IMR-90 (cell line): ENCODE measurements at regions of chr6 and their contacts with region 1.

Region 1: DNA sequence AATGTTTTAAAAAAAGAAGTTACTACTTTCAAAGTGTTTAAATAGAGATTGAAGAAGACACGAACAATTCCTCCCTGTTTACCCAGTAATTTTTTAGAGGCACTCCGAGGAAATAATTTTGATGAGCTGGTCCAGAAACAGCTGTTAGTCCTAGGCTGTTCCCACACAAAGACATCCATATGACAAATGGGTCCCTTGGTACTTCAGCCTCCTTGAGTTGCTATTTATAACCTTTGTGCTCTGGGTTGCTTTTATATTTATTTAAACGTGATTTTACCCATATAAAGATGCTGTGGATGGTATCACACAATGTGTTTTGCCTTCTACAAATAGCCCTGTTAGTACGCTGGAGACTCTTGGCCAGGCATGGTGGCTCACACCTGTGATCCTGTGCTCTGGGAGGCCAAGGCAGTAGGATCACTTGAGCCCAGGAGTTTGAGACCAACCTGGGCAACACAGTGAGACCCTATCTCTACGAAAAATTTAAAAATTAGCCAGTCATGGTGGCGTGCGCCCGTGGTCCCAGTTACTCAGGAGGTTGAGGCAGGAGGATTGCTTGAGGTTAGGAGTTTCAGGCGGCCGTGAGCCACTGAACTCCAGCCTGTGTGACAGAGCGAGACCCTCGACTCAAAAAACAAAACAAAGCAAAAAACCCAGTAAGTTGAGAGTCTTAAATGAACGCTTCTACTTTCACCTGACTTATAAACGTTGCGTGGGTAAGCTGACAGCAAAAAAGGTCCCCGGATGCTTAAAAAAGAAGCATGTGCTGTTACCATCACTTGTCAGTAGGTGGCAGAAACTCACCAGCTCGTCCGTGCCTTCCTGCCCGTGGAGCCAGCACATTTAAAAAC is 56.9 kb upstream of the ARMH2 start:
- DNase-seq: peak; percentile 78
- ATAC-seq: peak; percentile 89
- H3K4me3 ChIP-seq: no peak overlapping the region
- H3K27ac ChIP-seq: no peak overlapping the region
- H3K4me1 ChIP-seq: no peaks in the 10 kb centered on the region; the same call in 1 of the 2 replicates
- H3K27me3 ChIP-seq: no peaks in the 10 kb centered on the region
- CTCF ChIP-seq: peak; percentile 97
- POLR2A ChIP-seq: peak; percentile 45; the same call in 1 of the 2 replicates
- RAD21 ChIP-seq: peak; percentile 98

Region 2: DNA sequence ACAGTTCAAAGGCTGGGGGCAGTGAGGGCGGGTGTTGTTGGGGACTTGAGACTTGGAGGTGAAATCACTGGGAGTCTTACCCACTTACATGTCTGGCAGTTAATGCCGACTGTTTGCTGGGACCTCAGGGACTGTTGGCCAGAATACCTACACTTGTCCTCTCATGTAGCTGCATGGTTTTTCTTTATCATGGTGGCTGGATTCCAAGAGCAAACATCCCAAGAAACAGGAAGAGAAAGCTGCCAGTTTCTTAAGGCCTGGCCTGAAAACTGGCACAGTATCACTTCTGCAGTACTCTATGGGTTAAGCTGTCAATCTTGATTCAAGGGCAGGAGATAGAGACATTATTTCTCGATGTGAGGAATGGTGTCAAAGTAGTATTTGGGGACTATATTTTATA is 116.9 kb before region 1 on chr6:
- CTCF ChIA-PET with region 1: no interaction called
- POLR2A ChIA-PET with region 1: no interaction called
- dilution Hi-C with region 1: no loop called
- in situ Hi-C with region 1: no loop called
- intact Hi-C with region 1: no loop called
- DNase-seq: no peak
- ATAC-seq: no peak
- H3K4me3 ChIP-seq: no peak overlapping the region
- H3K27ac ChIP-seq: no peak overlapping the region
- H3K4me1 ChIP-seq: peaks cover 3% of the 10 kb centered on the region
- H3K27me3 ChIP-seq: no peaks in the 10 kb centered on the region
- CTCF ChIP-seq: no peak
- POLR2A ChIP-seq: no peak
- RAD21 ChIP-seq: no peak

Region 3: DNA sequence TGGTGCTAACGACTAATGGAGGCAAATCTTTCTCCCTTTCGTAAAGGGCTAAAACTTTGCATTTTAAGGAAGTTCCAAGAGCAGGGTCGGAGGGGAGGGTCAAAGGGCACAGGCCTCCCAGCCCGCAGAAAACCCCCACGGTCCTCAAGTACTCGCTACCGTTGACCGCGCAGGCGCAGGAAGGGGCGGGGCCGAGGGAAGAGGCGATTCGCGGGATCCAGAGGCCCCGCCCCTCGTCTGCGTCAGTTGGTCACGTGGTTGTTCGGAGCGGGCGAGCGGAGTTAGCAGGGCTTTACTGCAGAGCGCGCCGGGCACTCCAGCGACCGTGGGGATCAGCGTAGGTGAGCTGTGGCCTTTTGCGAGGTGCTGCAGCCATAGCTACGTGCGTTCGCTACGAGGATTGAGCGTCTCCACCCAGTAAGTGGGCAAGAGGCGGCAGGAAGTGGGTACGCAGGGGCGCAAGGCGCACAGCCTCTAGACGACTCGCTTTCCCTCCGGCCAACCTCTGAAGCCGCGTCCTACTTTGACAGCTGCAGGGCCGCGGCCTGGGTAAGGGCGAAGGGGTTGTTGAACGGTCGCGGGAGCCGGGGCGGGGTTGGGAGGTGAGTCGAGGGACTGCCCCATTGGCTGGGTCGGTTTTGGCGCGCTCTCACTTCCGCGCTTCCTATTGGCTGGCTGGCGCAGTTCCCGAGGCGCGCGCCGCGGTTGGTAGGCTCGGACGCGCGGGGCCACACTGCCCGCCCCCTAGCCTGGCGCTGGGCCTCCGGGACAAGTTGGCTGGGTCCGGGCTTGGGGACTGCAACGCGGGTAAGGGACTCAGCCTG is 80.7 kb before region 1 on chr6 and contains the start of gene GMNN:
- CTCF ChIA-PET with region 1: no interaction called
- POLR2A ChIA-PET with region 1: no interaction called
- dilution Hi-C with region 1: no loop called
- in situ Hi-C with region 1: no loop called
- intact Hi-C with region 1: loop called (anchors 5 kb)
- DNase-seq: peak; percentile 89
- ATAC-seq: peak; percentile 93
- H3K4me3 ChIP-seq: peak within 1 kb of the TSS; percentile 87
- H3K27ac ChIP-seq: peak within 1 kb of the TSS; percentile 83
- H3K4me1 ChIP-seq: peaks cover 8% of the 10 kb centered on the region
- H3K27me3 ChIP-seq: no peaks in the 10 kb centered on the region
- CTCF ChIP-seq: no peak
- POLR2A ChIP-seq: peak; percentile 73; the same call in 1 of the 2 replicates
- RAD21 ChIP-seq: no peak
- total RNA-seq, gene GMNN: 19.7 and 33.1 TPM in 2 replicates

Region 4: GRCh38 chr6:24919004-24919892 is 63.6 kb after region 1 on chr6:
- CTCF ChIA-PET with region 1: no interaction called
- POLR2A ChIA-PET with region 1: no interaction called
- dilution Hi-C with region 1: no loop called
- in situ Hi-C with region 1: no loop called
- intact Hi-C with region 1: no loop called
- DNase-seq: no peak
- ATAC-seq: peak; percentile 74
- H3K4me3 ChIP-seq: no peak overlapping the region
- H3K27ac ChIP-seq: peak overlapping the region; percentile 73; the same call in 1 of the 2 replicates
- H3K4me1 ChIP-seq: peaks cover 16% of the 10 kb centered on the region
- H3K27me3 ChIP-seq: no peaks in the 10 kb centered on the region
- CTCF ChIP-seq: no peak
- POLR2A ChIP-seq: no peak
- RAD21 ChIP-seq: no peak

Region 5: DNA sequence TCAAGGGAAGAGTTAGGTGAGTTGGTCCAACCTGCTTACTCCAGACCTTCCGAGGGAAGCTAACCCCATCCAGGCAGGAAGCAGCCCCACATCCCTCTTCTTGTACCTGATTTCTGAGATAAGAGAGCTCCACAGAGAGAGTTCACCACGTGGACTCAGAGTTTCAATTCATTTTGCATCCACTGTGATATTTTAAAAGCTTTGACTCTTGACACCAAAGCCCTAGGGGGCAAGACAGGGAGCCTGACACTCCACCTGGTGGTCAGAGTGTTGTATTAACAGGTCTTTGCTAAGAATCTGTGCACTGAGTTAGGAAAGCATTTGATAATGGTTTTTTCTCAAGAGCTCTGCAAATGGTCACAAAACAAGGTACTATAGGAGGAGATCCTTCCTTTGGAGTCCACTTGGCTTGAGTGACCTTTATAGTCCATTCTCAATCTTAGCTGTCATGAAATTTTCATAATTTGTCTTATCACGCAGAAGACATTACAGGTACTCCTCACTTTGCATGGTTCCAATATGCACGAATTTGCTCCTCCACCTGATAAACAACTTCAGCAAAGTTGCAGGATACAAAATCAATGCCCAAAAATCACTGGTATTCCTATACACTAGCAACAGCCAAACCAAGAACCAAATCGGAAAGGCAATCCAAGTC is 136.3 kb after region 1 on chr6:
- CTCF ChIA-PET with region 1: interaction called, 24 read pairs
- POLR2A ChIA-PET with region 1: no interaction called
- dilution Hi-C with region 1: no loop called
- in situ Hi-C with region 1: no loop called
- intact Hi-C with region 1: loop called (anchors 1 kb)
- DNase-seq: peak; percentile 48
- ATAC-seq: peak; percentile 74
- H3K4me3 ChIP-seq: no peak overlapping the region
- H3K27ac ChIP-seq: no peak overlapping the region
- H3K4me1 ChIP-seq: peaks cover 3% of the 10 kb centered on the region
- H3K27me3 ChIP-seq: no peaks in the 10 kb centered on the region
- CTCF ChIP-seq: peak; percentile 65
- POLR2A ChIP-seq: no peak
- RAD21 ChIP-seq: peak; percentile 69

Region 6: DNA sequence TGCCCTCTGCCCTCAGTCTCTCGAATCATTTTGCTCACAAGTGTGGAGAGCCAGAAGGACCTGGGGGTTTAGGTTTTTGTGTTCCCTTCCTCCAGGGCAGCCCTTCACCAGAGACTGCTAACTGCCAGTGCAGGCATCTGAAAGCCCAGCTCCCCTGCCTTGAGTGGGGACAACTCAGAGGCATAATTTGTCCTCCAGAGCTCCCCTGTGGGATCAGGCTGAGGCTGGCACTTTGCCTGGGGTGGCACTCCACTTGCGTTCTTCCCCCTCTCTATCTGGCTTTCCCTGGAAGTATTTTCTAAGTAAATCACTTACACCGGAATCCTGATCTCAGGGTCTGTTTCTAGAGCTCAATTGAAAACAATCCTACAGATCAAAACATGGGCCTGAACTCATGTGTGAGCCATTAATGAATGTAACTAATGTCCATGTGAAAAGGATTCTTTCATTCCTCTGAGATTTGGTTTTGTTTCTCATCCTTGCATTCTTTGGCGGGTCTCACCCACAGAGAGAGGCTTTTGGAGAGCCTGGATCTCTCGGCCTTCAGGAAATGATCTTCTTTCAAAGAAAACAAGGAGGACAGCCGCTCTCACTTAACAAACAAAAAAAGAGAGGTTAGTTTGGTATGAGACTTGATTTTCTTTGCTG is 205.8 kb after region 1 on chr6:
- CTCF ChIA-PET with region 1: interaction called, 3 read pairs
- POLR2A ChIA-PET with region 1: no interaction called
- dilution Hi-C with region 1: no loop called
- in situ Hi-C with region 1: loop called (anchors 5 kb)
- intact Hi-C with region 1: no loop called
- DNase-seq: peak; percentile 14
- ATAC-seq: peak; percentile 67
- H3K4me3 ChIP-seq: no peak overlapping the region
- H3K27ac ChIP-seq: peak overlapping the region; percentile 59; the same call in 1 of the 2 replicates
- H3K4me1 ChIP-seq: peaks cover 12% of the 10 kb centered on the region
- H3K27me3 ChIP-seq: no peaks in the 10 kb centered on the region
- CTCF ChIP-seq: no peak
- POLR2A ChIP-seq: no peak
- RAD21 ChIP-seq: no peak

Region 7: DNA sequence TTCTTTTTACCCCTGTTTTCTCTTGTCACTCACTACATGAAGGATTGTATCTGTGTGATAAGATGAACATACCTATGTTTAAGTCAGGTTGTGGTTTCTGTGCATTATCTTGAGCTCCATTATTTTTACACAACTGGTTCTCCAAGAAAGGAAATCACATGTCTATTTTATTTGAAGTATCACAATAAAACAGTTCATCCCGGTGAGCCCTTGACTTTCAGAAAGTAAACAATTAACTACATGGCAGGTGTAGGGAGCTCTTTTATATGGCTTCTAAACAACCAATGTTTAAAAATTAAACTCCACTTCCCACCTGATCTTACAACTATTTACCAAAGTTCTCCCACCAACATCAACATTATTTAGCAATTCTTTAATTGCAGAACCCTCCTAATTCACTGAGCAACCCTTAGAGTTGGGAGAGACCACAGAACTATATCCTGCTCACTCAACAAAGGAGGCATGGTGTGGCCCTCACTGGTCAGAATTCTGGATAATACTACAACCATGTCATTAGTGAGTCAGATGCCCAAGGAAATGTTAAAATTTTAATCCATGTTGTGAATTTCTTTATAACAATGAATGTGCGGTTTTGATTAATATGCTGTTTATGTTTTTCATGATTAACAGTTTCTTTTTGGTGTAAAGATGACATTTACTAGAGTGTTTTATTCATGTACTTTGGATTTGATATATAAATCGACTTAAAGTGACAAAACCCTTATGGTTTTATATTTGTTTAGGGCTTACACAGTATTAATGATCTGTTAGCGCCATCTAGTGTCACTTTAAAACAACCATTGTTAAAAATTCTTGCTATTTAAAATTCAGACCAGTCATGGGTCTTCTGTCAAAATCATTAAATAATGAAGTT is 746.4 kb after region 1 on chr6:
- CTCF ChIA-PET with region 1: no interaction called
- POLR2A ChIA-PET with region 1: no interaction called
- dilution Hi-C with region 1: no loop called
- in situ Hi-C with region 1: no loop called
- intact Hi-C with region 1: loop called (anchors 5 kb)
- DNase-seq: peak; percentile 67
- ATAC-seq: peak; percentile 62
- H3K4me3 ChIP-seq: no peak overlapping the region
- H3K27ac ChIP-seq: no peak overlapping the region
- H3K4me1 ChIP-seq: no peaks in the 10 kb centered on the region
- H3K27me3 ChIP-seq: no peaks in the 10 kb centered on the region
- CTCF ChIP-seq: peak; percentile 72
- POLR2A ChIP-seq: no peak
- RAD21 ChIP-seq: peak; percentile 71